Right ventricle myocardium inferior (tissue), 1 donor: ENCODE measurements at regions of chr6 and their contacts with region 1.

Region 1: GRCh38 chr6:167898673-167899311 is 72.1 kb downstream of the AFDN start:
- DNase-seq: no peak
- ATAC-seq: peak; percentile 23

Region 2: GRCh38 chr6:167485186-167485978 is 413.4 kb before region 1 on chr6:
- intact Hi-C with region 1: loop called (anchors 2 kb)
- DNase-seq: no peak
- ATAC-seq: peak; percentile 72

Region 3: GRCh38 chr6:167778497-167779139 is 120.2 kb before region 1 on chr6:
- intact Hi-C with region 1: no loop called
- DNase-seq: no peak
- ATAC-seq: no peak